HepG2 (cell line): ENCODE measurements at regions of chrX and their contacts with region 1.

Region 1: DNA sequence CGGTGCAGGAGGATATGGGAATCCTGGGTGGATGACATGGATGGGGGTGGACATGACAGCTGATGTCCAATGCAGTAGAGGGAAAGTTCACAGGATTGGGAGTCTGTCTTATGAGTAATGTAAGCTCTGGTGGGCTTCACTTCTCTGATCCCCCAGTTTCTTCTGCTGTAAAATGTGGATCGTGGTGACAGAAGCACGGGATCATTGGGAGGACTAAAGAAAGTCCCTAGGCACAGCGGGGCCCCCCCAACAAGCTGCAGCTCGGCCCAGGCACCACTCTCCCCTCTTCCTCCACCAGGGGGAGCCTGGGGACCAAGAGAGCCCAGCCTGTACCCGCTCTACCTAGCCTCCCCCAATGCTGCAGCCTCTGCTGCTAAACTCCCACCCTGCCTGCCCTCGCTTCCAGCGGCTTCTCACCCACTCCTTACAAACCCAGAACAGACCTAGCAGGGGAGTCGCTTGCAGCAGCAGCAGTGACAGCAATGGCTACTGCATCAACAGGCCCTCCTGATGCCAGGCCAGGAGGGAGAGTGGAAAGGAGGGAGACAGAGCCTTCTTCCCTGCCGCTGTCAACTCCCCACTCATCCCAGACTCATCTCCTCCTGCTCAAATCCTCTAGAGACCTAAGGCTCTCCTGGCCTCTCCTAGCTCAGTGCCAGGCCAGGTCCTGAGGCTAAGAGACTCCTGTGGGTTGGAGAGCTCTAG is 36.1 kb upstream of the IQSEC2 start:
- DNase-seq: peak; percentile 13
- ATAC-seq: peak; percentile 89
- H3K4me3 ChIP-seq: no peak overlapping the region
- H3K27ac ChIP-seq: no peak overlapping the region
- H3K4me1 ChIP-seq: no peaks in the 10 kb centered on the region
- H3K27me3 ChIP-seq: peaks cover 4 to 27% of the 10 kb centered on the region in 2 experiments; a peak in 4 of 5 replicates
- CTCF ChIP-seq: peak; percentile 80
- EP300 ChIP-seq: no peak
- POLR2A ChIP-seq: no peak
- RAD21 ChIP-seq: peak; percentile 46; the same call in 1 of the 2 replicates

Region 2: DNA sequence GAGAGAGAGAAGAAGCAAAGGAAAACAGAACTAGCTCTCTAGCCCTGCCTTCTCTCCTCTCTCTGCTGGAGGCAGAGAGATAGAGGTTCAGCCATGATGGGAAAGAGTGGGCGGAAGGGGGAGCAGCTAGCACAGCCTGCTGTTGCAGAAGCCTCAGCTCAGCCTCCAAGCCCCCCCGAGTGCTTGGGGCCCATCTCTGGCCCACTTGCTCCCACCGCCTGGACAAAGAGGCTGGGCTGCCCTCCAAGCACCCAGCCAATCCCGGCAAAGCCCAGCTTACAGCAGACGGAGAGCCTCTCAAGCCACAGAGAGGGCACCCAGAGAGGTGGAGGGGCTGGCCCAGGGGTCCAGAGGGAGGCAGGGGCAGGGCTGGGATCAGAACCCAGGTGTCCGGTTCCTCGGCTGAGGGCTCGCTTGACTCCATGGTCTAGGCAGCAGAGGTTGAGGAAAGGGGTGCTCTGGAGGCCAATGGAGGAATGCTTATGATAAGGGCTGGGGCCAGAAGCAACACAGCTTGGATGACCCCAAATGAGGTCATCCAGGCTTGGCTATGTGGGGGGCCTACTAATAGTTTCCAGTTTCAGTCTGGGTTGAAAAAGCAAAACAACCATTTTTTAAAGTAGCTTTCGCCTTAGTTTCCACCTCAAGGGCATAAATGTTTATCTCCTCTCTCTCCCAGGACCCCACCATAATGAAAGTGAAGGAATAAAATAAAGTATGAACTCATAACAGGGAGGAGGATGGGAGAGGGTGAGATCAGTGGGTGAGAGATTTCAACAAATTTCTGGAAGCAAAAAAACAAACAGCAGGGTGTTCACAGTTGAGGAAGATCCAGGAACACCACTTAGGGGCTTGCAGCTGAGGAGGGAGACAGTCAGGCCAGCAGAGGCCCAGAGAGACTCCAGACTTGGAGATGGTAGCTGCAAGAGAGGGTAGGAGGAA is 11.2 kb before region 1 on chrX:
- CTCF ChIA-PET with region 1: no interaction called
- POLR2A ChIA-PET with region 1: no interaction called
- in situ Hi-C with region 1: no loop called
- intact Hi-C with region 1: no loop called
- DNase-seq: no peak
- ATAC-seq: no peak
- H3K4me3 ChIP-seq: no peak overlapping the region
- H3K27ac ChIP-seq: no peak overlapping the region
- H3K4me1 ChIP-seq: no peaks in the 10 kb centered on the region
- H3K27me3 ChIP-seq: no peaks in the 10 kb centered on the region
- CTCF ChIP-seq: no peak
- EP300 ChIP-seq: no peak
- POLR2A ChIP-seq: no peak
- RAD21 ChIP-seq: no peak

Region 3: DNA sequence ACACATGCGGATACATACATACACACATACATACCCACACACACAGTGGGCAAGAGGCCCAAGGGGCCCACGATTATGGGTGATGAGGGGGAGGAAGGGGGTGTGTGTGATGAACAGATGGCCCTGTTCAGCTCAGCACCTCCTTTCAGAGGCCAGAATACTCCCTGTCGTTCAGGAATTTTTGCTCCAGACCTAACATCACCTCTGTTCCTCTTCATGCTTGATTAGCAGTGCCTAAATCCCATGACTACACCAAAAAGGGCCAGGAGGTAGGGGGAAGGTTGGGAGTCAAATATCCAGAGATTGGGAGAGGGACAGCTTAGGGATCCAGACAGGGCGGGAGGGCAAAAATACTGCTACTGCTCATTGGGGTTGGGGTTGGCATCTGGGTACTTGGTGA is 62.2 kb after region 1 on chrX:
- CTCF ChIA-PET with region 1: no interaction called
- POLR2A ChIA-PET with region 1: no interaction called
- in situ Hi-C with region 1: no loop called
- intact Hi-C with region 1: loop called (anchors 2 kb)
- DNase-seq: no peak
- ATAC-seq: no peak
- H3K4me3 ChIP-seq: no peak overlapping the region
- H3K27ac ChIP-seq: no peak overlapping the region
- H3K4me1 ChIP-seq: peaks cover 22% of the 10 kb centered on the region
- H3K27me3 ChIP-seq: no peaks in the 10 kb centered on the region
- CTCF ChIP-seq: no peak
- EP300 ChIP-seq: no peak
- POLR2A ChIP-seq: no peak
- RAD21 ChIP-seq: no peak

Region 4: GRCh38 chrX:53433651-53434639 is 116.4 kb after region 1 on chrX and contains the start of gene HSD17B10:
- CTCF ChIA-PET with region 1: interaction called, 7 read pairs
- POLR2A ChIA-PET with region 1: no interaction called
- in situ Hi-C with region 1: no loop called
- intact Hi-C with region 1: loop called (anchors 1 kb)
- DNase-seq: peak; percentile 69
- ATAC-seq: peak; percentile 98
- H3K4me3 ChIP-seq: peak within 1 kb of the TSS; percentile 67 to 87 (median 78)
- H3K27ac ChIP-seq: peak within 1 kb of the TSS; percentile 44
- H3K4me1 ChIP-seq: peaks cover 5% of the 10 kb centered on the region
- H3K27me3 ChIP-seq: no peaks in the 10 kb centered on the region; a peak in 1 of 5 replicates
- CTCF ChIP-seq: peak; percentile 7; the same call in 1 of the 2 replicates
- EP300 ChIP-seq: no peak
- POLR2A ChIP-seq: peak; percentile 43 to 79; a peak in 2 of 4 replicates
- RAD21 ChIP-seq: no peak
- total RNA-seq, gene HSD17B10: 84.7 and 98.9 TPM in 2 replicates

Region 5: GRCh38 chrX:53441531-53442321 is 124.2 kb after region 1 on chrX:
- CTCF ChIA-PET with region 1: interaction called, 10 read pairs
- POLR2A ChIA-PET with region 1: no interaction called
- in situ Hi-C with region 1: loop called (anchors 10 kb)
- intact Hi-C with region 1: loop called (anchors 1 kb)
- DNase-seq: peak; percentile 62
- ATAC-seq: peak; percentile 90
- H3K4me3 ChIP-seq: peak overlapping the region; percentile 15 to 65 (median 39); a peak in 5 of 6 replicates
- H3K27ac ChIP-seq: no peak overlapping the region
- H3K4me1 ChIP-seq: 0 out of 2 replicates have a peak, but pooled peaks cover 5% of the 10 kb centered on the region
- H3K27me3 ChIP-seq: no peaks in the 10 kb centered on the region; a peak in 1 of 5 replicates
- CTCF ChIP-seq: no peak
- EP300 ChIP-seq: no peak
- POLR2A ChIP-seq: no peak
- RAD21 ChIP-seq: no peak

Region 6: DNA sequence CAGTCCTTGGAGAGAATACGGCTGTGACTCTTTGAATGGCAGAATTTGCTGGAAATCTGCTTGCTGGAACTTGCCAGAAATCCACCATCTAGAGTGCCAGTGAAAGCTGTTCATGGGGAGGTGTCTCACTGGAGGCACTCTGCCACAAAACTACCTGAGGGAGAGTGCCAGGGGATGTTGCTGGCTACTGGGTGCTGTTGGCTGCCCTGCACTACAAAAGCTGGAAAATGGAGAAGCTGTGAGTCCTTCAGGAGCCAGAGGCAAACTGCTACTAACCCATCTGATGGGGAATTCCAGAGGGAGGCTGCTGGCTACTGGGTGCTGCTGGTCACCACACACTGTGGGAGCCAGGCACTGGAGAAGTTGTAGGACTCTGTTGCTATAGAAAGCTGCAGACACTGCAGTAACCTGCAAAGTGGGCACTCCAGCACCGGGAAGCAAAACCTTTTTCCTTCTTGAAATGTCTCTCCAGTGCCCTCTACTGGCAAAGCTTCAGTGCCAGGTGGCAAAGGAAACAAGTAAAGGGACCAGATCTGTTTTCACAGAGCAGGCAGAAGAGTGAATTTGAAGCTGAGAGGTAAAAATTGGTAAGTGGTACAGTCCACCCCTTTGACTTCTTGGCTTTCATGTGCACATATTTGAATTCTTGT is 164.4 kb after region 1 on chrX:
- CTCF ChIA-PET with region 1: interaction called, 7 read pairs
- POLR2A ChIA-PET with region 1: no interaction called
- in situ Hi-C with region 1: loop called (anchors 10 kb)
- intact Hi-C with region 1: loop called (anchors 1 kb)
- DNase-seq: peak; percentile 28
- ATAC-seq: peak; percentile 71
- H3K4me3 ChIP-seq: no peak overlapping the region
- H3K27ac ChIP-seq: no peak overlapping the region
- H3K4me1 ChIP-seq: no peaks in the 10 kb centered on the region
- H3K27me3 ChIP-seq: no peaks in the 10 kb centered on the region
- CTCF ChIP-seq: peak; percentile 55
- EP300 ChIP-seq: no peak
- POLR2A ChIP-seq: no peak
- RAD21 ChIP-seq: no peak